ENCODE measurements at regions of chr5 and their contacts with region 1.

Region 1: DNA sequence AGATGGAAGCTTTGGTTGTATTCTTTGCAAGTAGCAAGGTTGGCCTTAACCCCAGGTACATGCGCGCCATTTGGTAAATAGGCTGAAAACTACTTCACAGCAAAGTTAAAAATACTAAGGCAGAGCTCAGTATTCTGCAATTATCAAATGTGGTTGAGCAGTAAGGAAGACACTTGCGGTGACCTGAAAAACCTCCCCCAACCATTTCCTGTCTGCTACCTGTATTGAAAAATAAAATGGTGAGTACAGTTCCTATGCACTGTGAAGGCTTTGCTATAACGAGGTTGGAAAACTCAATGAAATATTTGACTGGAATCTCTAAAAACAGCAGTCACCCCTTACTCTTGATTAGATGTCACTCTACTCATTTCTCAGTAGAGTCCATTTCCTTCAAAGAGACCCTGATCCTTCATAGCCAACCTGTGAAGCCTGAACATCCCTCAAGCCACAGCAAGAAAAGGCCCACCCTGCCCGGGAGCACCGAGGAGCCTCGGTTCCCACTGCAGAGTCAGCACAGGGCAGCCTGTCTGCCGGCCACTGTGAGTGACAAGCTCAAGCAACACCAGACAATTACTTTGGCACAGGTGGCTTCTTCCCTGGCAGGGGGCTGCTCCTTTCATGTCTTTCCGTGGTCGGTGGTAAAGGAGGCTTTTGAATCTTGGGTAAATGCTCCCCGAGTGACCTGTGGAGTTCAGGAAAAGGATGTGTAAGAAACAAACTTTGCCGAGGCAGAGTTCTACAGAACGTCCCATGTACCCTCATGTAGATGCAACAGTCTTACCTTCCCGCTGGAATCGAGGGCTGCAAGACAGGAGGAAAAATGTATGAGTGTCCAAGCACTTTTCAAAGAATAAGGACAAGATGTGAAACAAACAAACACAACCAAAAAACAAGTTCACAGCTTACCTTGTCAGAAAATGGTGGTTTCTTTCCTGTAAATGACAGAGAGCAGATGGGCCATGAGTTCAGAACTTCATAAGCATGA is 29.6 kb downstream of the C5orf58 start:
- DNase-seq: peak; percentile 77 to 85 (median 80)
- H3K4me3 ChIP-seq: peak overlapping the region; percentile 4 to 28
- H3K4me3 Mint-ChIP-seq: peak overlapping the region; percentile 59 to 82 (median 72)
- H3K27ac ChIP-seq: peak overlapping the region; percentile 67
- H3K27ac Mint-ChIP-seq: peak overlapping the region; percentile 82 to 98 (median 95)
- H3K4me1 ChIP-seq: peaks cover 80% of the 10 kb centered on the region
- H3K4me1 Mint-ChIP-seq: peaks cover 51 to 89% (median 74%) of the 10 kb centered on the region in 4 donors
- H3K27me3 ChIP-seq: no peaks in the 10 kb centered on the region
- H3K27me3 Mint-ChIP-seq: no peaks in the 10 kb centered on the region

Region 2: GRCh38 chr5:169742771-169743296 is 519.5 kb before region 1 on chr5:
- CTCF ChIA-PET with region 1: no interaction called
- POLR2A ChIA-PET with region 1: no interaction called
- intact Hi-C with region 1: no loop called
- DNase-seq: no peak
- H3K4me3 ChIP-seq: no peak overlapping the region
- H3K4me3 Mint-ChIP-seq: no peak overlapping the region
- H3K27ac ChIP-seq: no peak overlapping the region
- H3K27ac Mint-ChIP-seq: no peak overlapping the region
- H3K4me1 ChIP-seq: no peaks in the 10 kb centered on the region
- H3K4me1 Mint-ChIP-seq: peaks cover 0 to 18% (median 5%) of the 10 kb centered on the region in 4 donors
- H3K27me3 ChIP-seq: no peaks in the 10 kb centered on the region
- H3K27me3 Mint-ChIP-seq: no peaks in the 10 kb centered on the region

Region 3: GRCh38 chr5:169945831-169946261 is 316.5 kb before region 1 on chr5:
- CTCF ChIA-PET with region 1: no interaction called
- POLR2A ChIA-PET with region 1: no interaction called
- intact Hi-C with region 1: no loop called
- DNase-seq: no peak
- H3K4me3 ChIP-seq: no peak overlapping the region
- H3K4me3 Mint-ChIP-seq: no peak overlapping the region
- H3K27ac ChIP-seq: no peak overlapping the region
- H3K27ac Mint-ChIP-seq: peak overlapping the region in 2 of 7 donors; percentile 37 to 38
- H3K4me1 ChIP-seq: no peaks in the 10 kb centered on the region
- H3K4me1 Mint-ChIP-seq: peaks cover 9 to 35% (median 17%) of the 10 kb centered on the region in 4 donors
- H3K27me3 ChIP-seq: no peaks in the 10 kb centered on the region
- H3K27me3 Mint-ChIP-seq: no peaks in the 10 kb centered on the region

Region 4: GRCh38 chr5:170247363-170247762 is 15.0 kb before region 1 on chr5:
- CTCF ChIA-PET with region 1: interaction called, 19 read pairs
- POLR2A ChIA-PET with region 1: interaction called, 34 read pairs
- intact Hi-C with region 1: no loop called
- DNase-seq: no peak
- H3K4me3 ChIP-seq: no peak overlapping the region
- H3K4me3 Mint-ChIP-seq: no peak overlapping the region
- H3K27ac ChIP-seq: no peak overlapping the region
- H3K27ac Mint-ChIP-seq: no peak overlapping the region
- H3K4me1 ChIP-seq: peaks cover 9% of the 10 kb centered on the region
- H3K4me1 Mint-ChIP-seq: peaks cover 4 to 16% (median 7%) of the 10 kb centered on the region in 4 donors
- H3K27me3 ChIP-seq: no peaks in the 10 kb centered on the region
- H3K27me3 Mint-ChIP-seq: no peaks in the 10 kb centered on the region

Region 5: DNA sequence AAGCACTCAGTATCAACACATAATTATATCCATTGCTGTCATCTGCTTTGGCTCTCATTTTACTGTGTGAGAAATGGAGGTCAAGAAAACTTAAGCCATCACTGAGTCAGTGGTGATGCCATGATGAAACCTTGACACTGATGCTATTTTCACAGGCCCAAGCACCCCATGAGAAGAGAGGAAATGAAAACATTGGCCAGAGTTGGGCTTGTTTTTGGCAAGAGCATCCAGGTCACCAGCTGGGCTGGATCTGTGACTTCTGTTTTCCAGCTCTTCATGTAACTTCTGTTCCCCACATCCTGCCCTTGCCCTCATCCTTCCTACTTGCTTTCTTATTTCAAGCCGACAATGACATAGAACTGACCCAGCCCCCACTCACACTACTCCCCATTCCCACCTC is 25.2 kb after region 1 on chr5:
- CTCF ChIA-PET with region 1: interaction called, 185 read pairs
- POLR2A ChIA-PET with region 1: interaction called, 1,265 read pairs
- intact Hi-C with region 1: no loop called
- DNase-seq: no peak
- H3K4me3 ChIP-seq: no peak overlapping the region
- H3K4me3 Mint-ChIP-seq: peak overlapping the region in 7 of 8 donors; percentile 22 to 99 (median 73)
- H3K27ac ChIP-seq: peak overlapping the region; percentile 49
- H3K27ac Mint-ChIP-seq: peak overlapping the region; percentile 80 to 100 (median 90)
- H3K4me1 ChIP-seq: peaks cover 99% of the 10 kb centered on the region
- H3K4me1 Mint-ChIP-seq: peaks cover 91 to 100% (median 96%) of the 10 kb centered on the region in 4 donors
- H3K27me3 ChIP-seq: no peaks in the 10 kb centered on the region
- H3K27me3 Mint-ChIP-seq: no peaks in the 10 kb centered on the region

Region 6: GRCh38 chr5:170368586-170368985 is 106.2 kb after region 1 on chr5:
- CTCF ChIA-PET with region 1: no interaction called
- POLR2A ChIA-PET with region 1: no interaction called
- intact Hi-C with region 1: no loop called
- DNase-seq: no peak
- H3K4me3 ChIP-seq: no peak overlapping the region
- H3K4me3 Mint-ChIP-seq: no peak overlapping the region
- H3K27ac ChIP-seq: no peak overlapping the region
- H3K27ac Mint-ChIP-seq: peak overlapping the region in 1 of 7 donors; percentile 5
- H3K4me1 ChIP-seq: no peaks in the 10 kb centered on the region
- H3K4me1 Mint-ChIP-seq: no peaks in the 10 kb centered on the region
- H3K27me3 ChIP-seq: no peaks in the 10 kb centered on the region
- H3K27me3 Mint-ChIP-seq: peaks cover 0 to 3% of the 10 kb centered on the region in 2 donors

Measured in CD4-positive, alpha-beta memory T cell (primary cell).